CD4-positive, alpha-beta memory T cell (primary cell): ENCODE measurements at regions of chr5 and their contacts with region 1.

Region 1: DNA sequence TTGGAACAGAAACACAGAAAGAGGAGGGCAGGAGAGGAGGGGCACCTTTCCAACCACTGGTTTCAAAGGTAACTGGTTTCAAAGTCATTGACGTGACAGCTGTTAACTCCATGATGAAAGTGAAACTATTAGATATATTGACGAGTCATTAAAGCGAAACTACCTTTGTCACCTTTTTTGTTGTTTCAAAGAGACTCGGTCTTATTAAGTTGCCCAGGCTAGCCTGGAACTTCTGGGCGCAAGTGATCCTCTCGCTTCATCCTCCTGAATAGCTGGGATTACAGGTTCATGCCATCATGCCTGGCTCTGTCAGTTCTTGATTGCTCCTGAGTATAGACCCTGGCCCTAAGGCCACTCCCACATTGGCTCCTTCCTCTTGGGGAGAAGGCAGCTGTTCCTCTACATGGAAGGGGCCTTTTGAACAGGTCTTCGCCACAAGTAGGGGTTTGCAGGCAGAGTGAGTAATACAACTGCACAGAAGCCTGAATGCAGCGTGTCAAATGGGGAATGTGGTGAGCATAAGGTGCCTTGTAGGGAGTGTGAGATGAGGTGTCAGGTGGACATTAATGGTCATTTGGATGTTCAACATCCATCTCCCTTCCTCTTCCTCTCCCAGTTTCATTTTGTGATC is 3.4 kb upstream of the F12 start:
- DNase-seq: peak in 4 of 5 donors; percentile 59 to 74 (median 65)
- H3K4me3 ChIP-seq: peak overlapping the region; percentile 6 to 37
- H3K4me3 Mint-ChIP-seq: peak overlapping the region; percentile 76 to 84 (median 79)
- H3K27ac ChIP-seq: peak overlapping the region; percentile 47
- H3K27ac Mint-ChIP-seq: peak overlapping the region; percentile 83 to 94 (median 86)
- H3K4me1 ChIP-seq: peaks cover 36% of the 10 kb centered on the region
- H3K4me1 Mint-ChIP-seq: peaks cover 20 to 49% (median 32%) of the 10 kb centered on the region in 4 donors
- H3K27me3 ChIP-seq: no peaks in the 10 kb centered on the region
- H3K27me3 Mint-ChIP-seq: no peaks in the 10 kb centered on the region

Region 2: DNA sequence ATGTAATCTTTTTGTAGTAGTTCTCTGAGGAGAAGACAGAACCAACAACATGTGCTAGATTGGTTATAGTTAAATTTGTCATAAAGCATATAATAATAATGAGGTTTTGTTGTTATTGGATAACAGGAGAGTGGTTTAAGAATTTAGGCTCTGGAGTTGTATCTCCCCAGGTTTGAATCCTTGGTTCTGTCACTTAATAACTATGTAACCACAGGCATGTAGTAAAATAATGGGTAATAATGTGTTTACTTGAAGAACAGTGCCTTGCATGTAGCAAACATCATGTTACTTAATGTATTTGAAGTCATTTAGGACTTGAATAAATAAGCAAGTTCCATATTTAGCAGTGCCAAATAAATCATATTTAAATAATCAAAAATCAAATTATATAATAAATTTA is 223.3 kb before region 1 on chr5:
- CTCF ChIA-PET with region 1: no interaction called
- POLR2A ChIA-PET with region 1: no interaction called
- intact Hi-C with region 1: no loop called
- DNase-seq: no peak
- H3K4me3 ChIP-seq: no peak overlapping the region
- H3K4me3 Mint-ChIP-seq: no peak overlapping the region
- H3K27ac ChIP-seq: no peak overlapping the region
- H3K27ac Mint-ChIP-seq: peak overlapping the region in 5 of 7 donors; percentile 15 to 65 (median 38)
- H3K4me1 ChIP-seq: peaks cover 7% of the 10 kb centered on the region
- H3K4me1 Mint-ChIP-seq: peaks cover 15 to 38% (median 28%) of the 10 kb centered on the region in 4 donors
- H3K27me3 ChIP-seq: no peaks in the 10 kb centered on the region
- H3K27me3 Mint-ChIP-seq: no peaks in the 10 kb centered on the region

Region 3: DNA sequence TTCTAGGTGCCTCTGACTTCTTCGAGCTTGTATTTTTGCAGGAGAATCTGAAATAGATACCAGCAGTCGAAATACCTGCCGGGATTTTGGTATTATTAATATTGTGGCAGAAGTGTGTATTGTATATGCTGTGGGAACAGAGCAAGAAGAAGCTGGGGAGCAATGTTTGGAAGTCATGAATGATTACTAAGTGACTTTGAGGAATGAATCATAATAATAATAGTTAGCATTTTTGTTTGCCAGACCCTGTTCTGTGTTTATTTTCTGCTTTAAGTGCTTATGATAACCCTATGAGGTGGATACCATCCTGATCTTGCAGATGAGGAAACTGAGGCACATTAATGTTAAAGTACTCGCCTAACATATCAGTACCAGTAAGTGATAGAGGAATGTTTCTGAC is 141.6 kb before region 1 on chr5:
- CTCF ChIA-PET with region 1: no interaction called
- POLR2A ChIA-PET with region 1: no interaction called
- intact Hi-C with region 1: no loop called
- DNase-seq: no peak
- H3K4me3 ChIP-seq: no peak overlapping the region
- H3K4me3 Mint-ChIP-seq: no peak overlapping the region
- H3K27ac ChIP-seq: no peak overlapping the region
- H3K27ac Mint-ChIP-seq: peak overlapping the region in 1 of 7 donors; percentile 47
- H3K4me1 ChIP-seq: no peaks in the 10 kb centered on the region
- H3K4me1 Mint-ChIP-seq: peaks cover 0 to 4% (median 2%) of the 10 kb centered on the region in 4 donors
- H3K27me3 ChIP-seq: no peaks in the 10 kb centered on the region
- H3K27me3 Mint-ChIP-seq: no peaks in the 10 kb centered on the region

Region 4: GRCh38 chr5:177425801-177426565 is 13.3 kb after region 1 on chr5:
- CTCF ChIA-PET with region 1: interaction called, 307 read pairs
- POLR2A ChIA-PET with region 1: interaction called, 109 read pairs
- intact Hi-C with region 1: loop called (anchors 1 kb)
- DNase-seq: peak; percentile 99 to 100 (median 100)
- H3K4me3 ChIP-seq: peak overlapping the region; percentile 21 to 53
- H3K4me3 Mint-ChIP-seq: peak overlapping the region; percentile 89 to 96 (median 92)
- H3K27ac ChIP-seq: peak overlapping the region; percentile 65
- H3K27ac Mint-ChIP-seq: peak overlapping the region; percentile 91 to 99 (median 99)
- H3K4me1 ChIP-seq: peaks cover 52% of the 10 kb centered on the region
- H3K4me1 Mint-ChIP-seq: peaks cover 31 to 65% (median 44%) of the 10 kb centered on the region in 4 donors
- H3K27me3 ChIP-seq: no peaks in the 10 kb centered on the region
- H3K27me3 Mint-ChIP-seq: no peaks in the 10 kb centered on the region

Region 5: GRCh38 chr5:177431317-177432142 is 18.8 kb after region 1 on chr5:
- CTCF ChIA-PET with region 1: interaction called, 821 read pairs
- POLR2A ChIA-PET with region 1: interaction called, 141 read pairs
- intact Hi-C with region 1: loop called (anchors 1 kb)
- DNase-seq: peak; percentile 81 to 88 (median 85)
- H3K4me3 ChIP-seq: peak overlapping the region; percentile 36 to 87
- H3K4me3 Mint-ChIP-seq: peak overlapping the region; percentile 85 to 97 (median 94)
- H3K27ac ChIP-seq: peak overlapping the region; percentile 87
- H3K27ac Mint-ChIP-seq: peak overlapping the region; percentile 91 to 99 (median 96)
- H3K4me1 ChIP-seq: peaks cover 94% of the 10 kb centered on the region
- H3K4me1 Mint-ChIP-seq: peaks cover 34 to 89% (median 59%) of the 10 kb centered on the region in 4 donors
- H3K27me3 ChIP-seq: no peaks in the 10 kb centered on the region
- H3K27me3 Mint-ChIP-seq: no peaks in the 10 kb centered on the region

Region 6: DNA sequence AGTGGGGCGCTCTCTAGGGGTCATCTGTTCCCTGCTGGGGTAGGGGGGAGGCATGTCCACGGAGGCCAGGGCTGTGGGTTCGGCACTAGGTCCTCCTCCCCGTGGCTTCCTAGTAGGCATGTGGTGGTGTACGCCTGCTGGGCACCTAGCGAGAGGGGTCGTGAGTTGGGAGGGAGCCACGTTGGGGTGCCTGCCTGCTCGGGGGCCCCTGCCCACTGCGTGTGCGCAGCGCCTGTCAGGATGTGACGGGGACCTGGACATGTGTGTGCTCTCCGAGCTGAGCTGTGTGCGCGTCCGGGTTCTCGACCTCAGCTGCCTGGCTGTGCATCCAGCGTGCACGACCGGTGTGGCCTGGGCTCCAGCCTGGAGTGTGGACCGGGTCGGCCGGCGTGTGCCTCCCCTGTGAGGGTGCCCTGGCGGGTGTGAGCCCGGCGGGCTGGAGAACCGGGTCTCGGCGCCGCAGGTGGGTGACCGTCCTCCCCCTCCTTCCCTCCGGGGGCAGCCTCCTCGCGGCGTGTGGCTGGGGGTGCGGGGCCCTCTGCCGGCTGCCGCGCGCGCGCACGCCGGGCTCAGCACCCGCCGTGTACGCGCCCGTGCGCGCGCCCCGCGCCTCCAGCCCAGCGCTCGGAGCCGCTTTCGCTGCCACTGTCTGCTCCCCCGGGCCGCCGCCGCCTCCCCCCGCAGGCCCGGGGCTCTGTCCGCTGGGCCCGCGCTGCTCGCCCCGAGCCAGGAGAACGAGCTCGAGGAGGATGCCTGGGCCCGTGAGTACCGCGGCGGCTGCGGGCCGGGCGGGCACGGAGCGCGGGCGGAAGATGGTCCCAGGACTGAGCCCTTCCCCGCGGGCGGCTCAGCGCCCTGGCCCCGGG is 33.7 kb after region 1 on chr5 and contains the start of gene PRR7:
- CTCF ChIA-PET with region 1: interaction called, 821 read pairs
- POLR2A ChIA-PET with region 1: interaction called, 141 read pairs
- intact Hi-C with region 1: no loop called
- DNase-seq: peak; percentile 77 to 85 (median 82)
- H3K4me3 ChIP-seq: peak within 1 kb of the TSS in 1 of 2 donors; percentile 50
- H3K4me3 Mint-ChIP-seq: peak within 1 kb of the TSS; percentile 81 to 90 (median 85)
- H3K27ac ChIP-seq: peak within 1 kb of the TSS; percentile 94
- H3K27ac Mint-ChIP-seq: peak within 1 kb of the TSS; percentile 95 to 99 (median 97)
- H3K4me1 ChIP-seq: peaks cover 51% of the 10 kb centered on the region
- H3K4me1 Mint-ChIP-seq: peaks cover 25 to 53% (median 41%) of the 10 kb centered on the region in 4 donors
- H3K27me3 ChIP-seq: no peaks in the 10 kb centered on the region
- H3K27me3 Mint-ChIP-seq: no peaks in the 10 kb centered on the region
- total RNA-seq, gene PRR7: 5.2 to 7.2 TPM